Head of caudate nucleus (tissue), 42 donors: ENCODE measurements at regions of chr14 and their contacts with region 1.

Region 1: GRCh38 chr14:74109369-74109768 is 24.6 kb downstream of the LIN52 start:
- DNase-seq: no peak

Region 2: GRCh38 chr14:74008843-74009499 is 100.4 kb before region 1 on chr14:
- intact Hi-C with region 1: no loop called
- DNase-seq: no peak

Region 3: DNA sequence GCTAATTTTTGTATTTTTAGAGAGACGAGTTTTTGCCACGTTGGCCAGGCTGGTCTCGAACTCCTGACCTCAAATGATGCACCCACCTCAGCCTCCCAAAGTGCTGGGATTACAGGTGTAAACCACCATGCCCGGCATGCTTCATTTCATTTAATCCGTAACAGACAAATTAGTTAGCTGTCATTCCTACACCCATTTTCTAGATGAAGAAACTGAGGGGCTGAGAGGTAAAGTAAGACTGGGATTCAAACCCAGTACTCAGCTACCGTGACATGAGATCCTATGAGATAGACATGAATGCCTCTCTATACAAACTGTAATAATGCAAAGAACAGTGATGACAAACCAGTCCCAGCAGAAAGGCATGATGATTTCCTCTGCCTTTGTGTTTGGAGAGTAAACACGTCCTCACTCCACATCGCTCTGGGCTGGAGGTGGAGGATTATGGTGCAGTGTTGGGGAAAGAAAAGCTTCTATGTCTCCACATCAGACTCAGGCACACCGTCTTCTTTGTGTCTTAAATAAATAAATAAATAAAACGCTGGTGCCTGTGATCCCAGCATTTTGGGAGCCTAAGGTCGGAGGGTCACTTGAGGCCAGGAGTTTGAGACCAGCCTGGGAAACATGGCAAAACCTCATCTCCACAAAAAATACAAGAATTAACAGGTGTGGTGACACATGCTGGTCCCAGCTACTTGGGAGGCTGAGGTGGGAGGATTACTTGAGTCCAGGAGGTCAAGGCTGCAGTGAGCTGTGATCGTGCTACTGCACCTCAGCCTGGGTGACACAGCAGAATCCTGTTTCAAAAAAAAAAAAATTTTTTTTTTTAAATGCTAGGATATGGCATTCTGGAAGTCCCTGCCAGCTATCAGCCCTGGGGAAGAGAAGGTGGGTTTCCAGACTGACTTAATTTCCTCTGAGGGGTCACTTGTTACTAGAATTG is 140.3 kb after region 1 on chr14:
- intact Hi-C with region 1: loop called (anchors 5 kb)
- DNase-seq: no peak